ENCODE measurements at regions of chr19 and their contacts with region 1.

Region 1: GRCh38 chr19:15869109-15869555 is 28.7 kb downstream of the CYP4F2 start:
- DNase-seq: peak in 2 of 4 donors; percentile 13 to 45
- ATAC-seq: peak; percentile 99
- H3K4me3 ChIP-seq: no peak overlapping the region
- H3K27ac ChIP-seq: peak overlapping the region in 1 of 2 donors; percentile 1
- H3K4me1 ChIP-seq: peaks cover 0 to 11% of the 10 kb centered on the region in 2 donors
- H3K27me3 ChIP-seq: peaks cover 0 to 32% of the 10 kb centered on the region in 2 donors
- CTCF ChIP-seq: peak; percentile 68 to 70

Region 2: DNA sequence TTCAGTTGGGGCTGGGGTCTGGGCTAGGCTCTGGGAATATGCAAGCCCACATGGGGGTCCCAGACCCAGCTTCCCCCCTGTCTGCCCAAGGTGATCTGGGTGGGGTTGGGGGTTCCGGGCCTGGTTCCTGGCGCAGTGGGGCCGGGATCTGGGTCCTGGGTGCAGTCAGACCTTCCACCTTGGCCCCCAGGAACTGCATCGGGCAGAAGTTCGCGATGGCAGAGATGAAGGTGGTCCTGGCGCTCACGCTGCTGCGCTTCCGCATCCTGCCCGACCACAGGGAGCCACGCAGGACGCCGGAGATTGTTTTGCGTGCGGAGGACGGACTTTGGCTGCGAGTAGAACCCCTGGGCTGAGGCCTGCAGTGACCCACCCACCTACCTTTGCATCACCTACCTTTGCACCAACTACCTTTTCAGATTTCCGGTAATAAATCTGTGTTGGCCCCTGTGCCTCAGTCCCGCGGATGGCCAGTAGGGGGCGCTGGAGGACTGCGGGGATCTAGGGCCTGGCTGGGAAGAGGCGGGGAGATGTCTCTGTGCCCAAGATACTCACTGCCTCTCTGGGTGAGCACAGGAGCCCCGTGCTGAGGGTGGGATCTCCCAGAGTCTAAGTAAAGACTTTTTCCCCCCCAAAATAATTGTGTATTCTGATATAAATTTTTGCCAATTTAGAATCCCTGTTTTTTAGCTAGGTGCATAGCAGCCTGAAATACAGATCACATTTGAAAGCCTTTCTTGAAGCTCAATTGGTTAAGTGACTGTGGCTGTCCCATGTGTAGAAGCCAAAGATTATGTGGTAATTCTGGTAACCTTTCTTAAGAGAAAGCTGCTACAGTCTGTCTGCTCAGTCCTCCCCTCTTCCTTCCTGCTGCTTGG is 239.9 kb before region 1 on chr19:
- intact Hi-C with region 1: loop called in 1 of 2 experiments (anchors 10 kb)
- DNase-seq: peak; percentile 50 to 97 (median 73)
- ATAC-seq: peak; percentile 99
- H3K4me3 ChIP-seq: no peak overlapping the region
- H3K27ac ChIP-seq: no peak overlapping the region
- H3K4me1 ChIP-seq: peaks cover 0 to 22% of the 10 kb centered on the region in 2 donors
- H3K27me3 ChIP-seq: peaks cover 0 to 40% of the 10 kb centered on the region in 2 donors
- CTCF ChIP-seq: peak; percentile 93 to 94

Region 3: DNA sequence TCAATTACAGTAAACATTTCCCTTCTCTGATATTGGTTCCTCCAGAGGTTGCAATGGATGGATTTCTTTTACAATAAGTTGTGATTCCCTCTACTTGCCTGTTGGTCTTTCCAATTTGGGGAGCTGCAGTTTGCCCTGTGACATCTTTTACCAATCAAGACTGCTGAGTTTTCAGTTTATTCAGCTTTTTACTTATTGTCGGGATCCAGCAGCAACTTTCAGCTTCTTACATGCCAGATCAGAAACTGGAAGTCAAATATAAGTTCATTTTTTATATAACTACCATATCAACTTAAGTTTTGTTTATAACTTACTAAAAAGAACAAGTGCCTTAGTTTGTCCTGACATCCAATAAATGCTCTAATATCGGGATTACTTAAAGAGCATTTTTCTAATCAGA is 120.9 kb before region 1 on chr19:
- intact Hi-C with region 1: no loop called
- DNase-seq: no peak
- ATAC-seq: no peak
- H3K4me3 ChIP-seq: no peak overlapping the region
- H3K27ac ChIP-seq: no peak overlapping the region
- H3K4me1 ChIP-seq: no peaks in the 10 kb centered on the region
- H3K27me3 ChIP-seq: peaks cover 5 to 60% of the 10 kb centered on the region in 2 donors
- CTCF ChIP-seq: no peak

Region 4: GRCh38 chr19:15971222-15971780 is 102.2 kb after region 1 on chr19:
- intact Hi-C with region 1: no loop called
- DNase-seq: no peak
- ATAC-seq: no peak
- H3K4me3 ChIP-seq: no peak overlapping the region
- H3K27ac ChIP-seq: no peak overlapping the region
- H3K4me1 ChIP-seq: no peaks in the 10 kb centered on the region
- H3K27me3 ChIP-seq: no peaks in the 10 kb centered on the region
- CTCF ChIP-seq: no peak

Measured in left lung (tissue), 14 donors.